ENCODE measurements at regions of chr1 and their contacts with region 1.

Region 1: DNA sequence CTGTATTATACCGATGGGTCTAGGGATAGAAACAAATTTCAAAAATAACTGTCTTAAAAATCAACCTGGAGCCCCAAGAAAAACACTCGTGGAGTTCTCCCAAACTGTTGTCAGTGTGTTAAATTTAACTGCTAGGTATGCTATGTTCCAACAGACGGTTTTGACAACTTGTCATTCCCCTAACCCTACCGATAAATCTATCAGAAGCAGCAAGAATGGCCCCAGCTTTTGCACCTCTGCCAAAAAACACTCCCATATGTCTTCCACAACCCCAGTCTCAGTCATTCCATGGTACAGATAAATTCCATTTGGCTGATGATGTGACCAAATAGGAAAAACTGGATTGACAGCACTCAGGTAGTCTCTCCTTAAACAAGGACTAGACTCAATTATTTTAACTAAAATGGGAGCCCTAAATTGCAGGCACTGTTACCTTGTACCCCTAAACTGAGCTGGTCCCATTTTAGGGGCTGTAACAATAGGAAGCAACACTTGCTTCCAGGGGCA is 4.9 kb downstream of the UCHL5 start:
- DNase-seq: no peak
- ATAC-seq: no peak
- H3K4me3 ChIP-seq: no peak overlapping the region
- H3K27ac ChIP-seq: no peak overlapping the region
- H3K4me1 ChIP-seq: peaks cover 11% of the 10 kb centered on the region
- H3K27me3 ChIP-seq: no peaks in the 10 kb centered on the region
- CTCF ChIP-seq: no peak

Region 2: GRCh38 chr1:192846950-192847349 is 207.3 kb before region 1 on chr1:
- CTCF ChIA-PET with region 1: no interaction called
- POLR2A ChIA-PET with region 1: no interaction called
- in situ Hi-C with region 1: no loop called
- intact Hi-C with region 1: no loop called
- DNase-seq: no peak
- ATAC-seq: no peak
- H3K4me3 ChIP-seq: no peak overlapping the region
- H3K27ac ChIP-seq: no peak overlapping the region
- H3K4me1 ChIP-seq: no peaks in the 10 kb centered on the region
- H3K27me3 ChIP-seq: peaks cover 2% of the 10 kb centered on the region
- CTCF ChIP-seq: no peak

Region 3: GRCh38 chr1:193042766-193043691 is 11.2 kb before region 1 on chr1:
- CTCF ChIA-PET with region 1: interaction called, 11 read pairs
- POLR2A ChIA-PET with region 1: no interaction called
- in situ Hi-C with region 1: no loop called
- intact Hi-C with region 1: no loop called
- DNase-seq: no peak
- ATAC-seq: no peak
- H3K4me3 ChIP-seq: no peak overlapping the region
- H3K27ac ChIP-seq: no peak overlapping the region
- H3K4me1 ChIP-seq: no peaks in the 10 kb centered on the region
- H3K27me3 ChIP-seq: no peaks in the 10 kb centered on the region
- CTCF ChIP-seq: no peak

Region 4: DNA sequence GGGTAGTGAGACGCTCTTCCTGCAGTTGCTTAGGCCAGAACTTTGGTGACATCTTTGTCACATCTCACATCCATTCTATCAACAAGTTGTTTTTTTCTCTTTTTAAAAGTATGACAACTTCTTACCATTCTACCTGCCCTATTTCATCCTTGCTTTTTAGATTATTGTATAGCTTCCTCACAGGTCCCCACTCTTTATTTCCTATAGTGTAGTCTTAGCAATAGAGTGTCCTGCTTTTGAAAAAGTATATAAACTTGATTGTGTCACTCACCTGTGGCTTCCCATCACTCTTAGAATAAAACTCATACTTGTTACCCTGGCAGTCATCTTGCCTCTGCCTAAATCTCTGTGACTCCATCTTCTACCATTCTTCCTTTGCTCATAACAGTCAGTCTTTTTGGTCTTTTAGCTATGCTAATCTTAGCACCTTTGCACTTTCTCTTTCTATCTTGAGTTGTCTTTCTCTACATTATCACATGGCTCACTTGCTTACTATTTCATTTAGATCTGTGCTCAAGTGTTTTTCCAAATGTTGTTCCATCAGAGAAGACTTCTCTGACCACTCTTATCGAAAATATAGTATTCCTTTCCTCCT is 77.1 kb after region 1 on chr1:
- CTCF ChIA-PET with region 1: no interaction called
- POLR2A ChIA-PET with region 1: no interaction called
- in situ Hi-C with region 1: no loop called
- intact Hi-C with region 1: no loop called
- DNase-seq: no peak
- ATAC-seq: no peak
- H3K4me3 ChIP-seq: no peak overlapping the region
- H3K27ac ChIP-seq: no peak overlapping the region
- H3K4me1 ChIP-seq: no peaks in the 10 kb centered on the region
- H3K27me3 ChIP-seq: no peaks in the 10 kb centered on the region
- CTCF ChIP-seq: no peak

Region 5: GRCh38 chr1:193960499-193960898 is 906.3 kb after region 1 on chr1:
- CTCF ChIA-PET with region 1: no interaction called
- POLR2A ChIA-PET with region 1: no interaction called
- in situ Hi-C with region 1: no loop called
- intact Hi-C with region 1: no loop called
- DNase-seq: no peak
- ATAC-seq: no peak
- H3K4me3 ChIP-seq: no peak overlapping the region
- H3K27ac ChIP-seq: no peak overlapping the region
- H3K4me1 ChIP-seq: no peaks in the 10 kb centered on the region
- H3K27me3 ChIP-seq: no peaks in the 10 kb centered on the region
- CTCF ChIP-seq: no peak